BJ (cell line): ENCODE measurements at regions of chr14 and their contacts with region 1.

Region 1: DNA sequence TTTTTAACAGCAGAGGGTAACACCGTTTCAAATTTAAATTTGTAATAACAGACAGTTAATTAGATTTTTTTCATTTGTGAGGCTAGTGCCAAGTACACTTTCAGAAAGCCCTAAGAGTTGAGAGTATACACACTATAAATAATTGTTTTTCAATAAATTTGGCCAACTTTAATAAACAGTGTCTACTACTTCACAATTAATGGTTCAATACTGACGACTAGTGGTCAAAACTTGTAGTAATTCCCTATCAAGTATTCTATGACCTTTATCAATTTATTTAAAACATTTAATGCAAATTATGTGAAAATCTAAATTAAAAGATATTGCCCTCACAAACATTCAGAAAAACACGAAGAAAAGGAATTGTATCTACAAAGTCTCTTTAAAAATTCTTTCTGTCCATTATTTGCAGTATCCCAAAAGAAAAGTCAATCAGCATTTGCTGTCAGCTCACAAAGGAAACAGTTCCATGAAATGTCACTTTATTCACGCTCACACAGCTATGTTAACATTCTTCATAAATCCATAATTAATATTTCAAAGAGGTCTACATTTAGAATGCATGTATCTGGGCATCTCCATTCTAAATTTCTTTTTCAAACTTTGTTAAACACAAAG is 91.2 kb downstream of the CEP128 start:
- DNase-seq: peak; percentile 9
- H3K4me3 ChIP-seq: no peak overlapping the region
- H3K27me3 ChIP-seq: no peaks in the 10 kb centered on the region
- CTCF ChIP-seq: peak; percentile 33

Region 2: DNA sequence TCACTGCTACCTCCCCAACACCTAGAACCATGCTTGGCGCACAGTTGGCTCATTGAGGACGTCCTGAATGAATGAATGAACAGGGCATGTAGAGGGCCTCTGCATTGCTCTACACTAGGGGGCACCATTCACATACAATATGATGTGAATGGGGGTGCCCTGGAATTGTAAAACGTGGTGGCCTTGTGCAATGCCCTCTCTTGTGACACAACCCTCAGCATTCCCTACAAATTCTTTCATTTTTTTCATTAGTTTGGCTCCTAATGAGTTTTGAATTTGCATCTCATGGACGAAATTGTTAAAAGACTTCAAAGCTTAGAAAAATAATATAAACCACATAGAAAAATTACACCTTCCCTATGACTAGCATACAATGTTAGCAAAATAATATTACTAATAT is 636.7 kb before region 1 on chr14:
- CTCF ChIA-PET with region 1: interaction called, 10 read pairs
- POLR2A ChIA-PET with region 1: no interaction called
- DNase-seq: no peak
- H3K4me3 ChIP-seq: no peak overlapping the region
- H3K27me3 ChIP-seq: no peaks in the 10 kb centered on the region
- CTCF ChIP-seq: peak; percentile 76

Region 3: GRCh38 chr14:80587075-80587724 is 263.1 kb before region 1 on chr14:
- CTCF ChIA-PET with region 1: no interaction called
- POLR2A ChIA-PET with region 1: interaction called, 10 read pairs
- DNase-seq: no peak
- H3K4me3 ChIP-seq: no peak overlapping the region
- H3K27me3 ChIP-seq: no peaks in the 10 kb centered on the region
- CTCF ChIP-seq: peak; percentile 55

Region 4: GRCh38 chr14:80718940-80719339 is 131.4 kb before region 1 on chr14:
- CTCF ChIA-PET with region 1: no interaction called
- POLR2A ChIA-PET with region 1: no interaction called
- DNase-seq: no peak
- H3K4me3 ChIP-seq: no peak overlapping the region
- H3K27me3 ChIP-seq: no peaks in the 10 kb centered on the region
- CTCF ChIP-seq: no peak

Region 5: GRCh38 chr14:80872124-80872523 is 21.8 kb after region 1 on chr14:
- CTCF ChIA-PET with region 1: no interaction called
- POLR2A ChIA-PET with region 1: no interaction called
- DNase-seq: no peak
- H3K4me3 ChIP-seq: no peak overlapping the region
- H3K27me3 ChIP-seq: no peaks in the 10 kb centered on the region
- CTCF ChIP-seq: no peak